ENCODE measurements at regions of chr4 and their contacts with region 1.

Region 1: GRCh38 chr4:26197018-26197779 is 123.6 kb upstream of the RBPJ start:
- DNase-seq: peak in 5 of 9 donors; percentile 1 to 74 (median 6)
- ATAC-seq: peak; percentile 78
- H3K4me3 ChIP-seq: peak overlapping the region; percentile 31
- H3K4me3 Mint-ChIP-seq: peak overlapping the region in 9 of 10 donors; percentile 21 to 82 (median 63)
- H3K27ac ChIP-seq: peak overlapping the region; percentile 38
- H3K27ac Mint-ChIP-seq: peak overlapping the region in 8 of 9 donors; percentile 42 to 95 (median 80)
- H3K4me1 ChIP-seq: peaks cover 17 to 37% of the 10 kb centered on the region in 2 donors
- H3K4me1 Mint-ChIP-seq: peaks cover 18 to 80% (median 30%) of the 10 kb centered on the region in 7 donors
- H3K27me3 ChIP-seq: no peaks in the 10 kb centered on the region
- H3K27me3 Mint-ChIP-seq: no peaks in the 10 kb centered on the region

Region 2: GRCh38 chr4:26076000-26076587 is 121.1 kb before region 1 on chr4:
- CTCF ChIA-PET with region 1: no interaction called
- POLR2A ChIA-PET with region 1: no interaction called
- intact Hi-C with region 1: loop called in 1 of 2 experiments (anchors 1 kb)
- DNase-seq: peak in 1 of 9 donors; percentile 53
- ATAC-seq: peak; percentile 77
- H3K4me3 ChIP-seq: no peak overlapping the region
- H3K4me3 Mint-ChIP-seq: peak overlapping the region in 1 of 10 donors; percentile 63
- H3K27ac ChIP-seq: no peak overlapping the region
- H3K27ac Mint-ChIP-seq: peak overlapping the region in 1 of 9 donors; percentile 91
- H3K4me1 ChIP-seq: peaks cover 0 to 15% of the 10 kb centered on the region in 2 donors
- H3K4me1 Mint-ChIP-seq: peaks cover 3 to 63% (median 14%) of the 10 kb centered on the region in 7 donors
- H3K27me3 ChIP-seq: no peaks in the 10 kb centered on the region
- H3K27me3 Mint-ChIP-seq: peaks cover 0 to 15% (median 0%) of the 10 kb centered on the region in 5 donors

Region 3: DNA sequence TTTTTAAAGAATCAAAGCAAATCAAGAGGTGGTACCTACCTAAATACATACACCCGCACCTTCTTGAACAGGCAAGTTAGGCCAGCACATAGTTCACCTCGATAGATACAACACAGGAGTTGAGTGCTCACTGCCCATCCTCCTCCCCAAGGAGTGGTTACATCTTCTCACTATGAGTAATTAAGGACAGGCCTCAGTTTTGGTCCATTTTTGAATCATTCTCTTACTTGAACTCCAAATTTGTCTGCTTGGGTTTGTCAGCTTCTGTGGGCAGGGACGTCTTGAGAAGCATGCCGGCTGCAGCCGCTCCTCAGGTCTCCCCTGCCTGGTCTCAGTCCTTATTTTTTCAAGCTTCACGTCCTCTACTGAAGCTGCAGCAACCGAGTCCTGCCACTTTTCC is 67.0 kb before region 1 on chr4:
- CTCF ChIA-PET with region 1: no interaction called
- POLR2A ChIA-PET with region 1: no interaction called
- intact Hi-C with region 1: loop called in 1 of 2 experiments (anchors 5 kb)
- DNase-seq: no peak
- ATAC-seq: no peak
- H3K4me3 ChIP-seq: no peak overlapping the region
- H3K4me3 Mint-ChIP-seq: peak overlapping the region in 1 of 10 donors; percentile 6
- H3K27ac ChIP-seq: no peak overlapping the region
- H3K27ac Mint-ChIP-seq: peak overlapping the region in 1 of 9 donors; percentile 68
- H3K4me1 ChIP-seq: peaks cover 0 to 14% of the 10 kb centered on the region in 2 donors
- H3K4me1 Mint-ChIP-seq: peaks cover 0 to 54% (median 0%) of the 10 kb centered on the region in 7 donors
- H3K27me3 ChIP-seq: no peaks in the 10 kb centered on the region
- H3K27me3 Mint-ChIP-seq: peaks cover 0 to 13% (median 9%) of the 10 kb centered on the region in 5 donors

Region 4: DNA sequence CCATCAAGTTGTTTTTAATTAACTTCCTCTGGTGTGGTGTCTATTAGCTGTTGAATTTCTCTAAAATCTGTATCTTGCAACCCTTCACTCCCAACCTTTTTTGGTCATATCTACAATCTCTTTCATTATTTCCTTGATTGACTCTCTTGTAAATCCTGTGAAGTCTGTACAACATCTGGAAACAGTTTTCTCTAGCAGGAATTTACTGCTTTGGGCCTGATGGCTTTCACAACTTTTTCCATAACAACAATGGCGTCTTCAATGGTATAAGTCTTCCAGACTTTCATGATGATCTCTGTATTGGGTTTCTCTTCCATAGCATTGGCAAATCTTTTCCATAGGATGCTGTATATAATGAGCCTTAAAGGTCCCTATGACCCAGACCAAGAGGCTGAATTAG is 435.7 kb after region 1 on chr4:
- CTCF ChIA-PET with region 1: no interaction called
- POLR2A ChIA-PET with region 1: no interaction called
- intact Hi-C with region 1: no loop called
- DNase-seq: no peak
- ATAC-seq: no peak
- H3K4me3 ChIP-seq: no peak overlapping the region
- H3K4me3 Mint-ChIP-seq: no peak overlapping the region
- H3K27ac ChIP-seq: no peak overlapping the region
- H3K27ac Mint-ChIP-seq: no peak overlapping the region
- H3K4me1 ChIP-seq: no peaks in the 10 kb centered on the region
- H3K4me1 Mint-ChIP-seq: peaks cover 0 to 4% (median 0%) of the 10 kb centered on the region in 7 donors
- H3K27me3 ChIP-seq: no peaks in the 10 kb centered on the region
- H3K27me3 Mint-ChIP-seq: no peaks in the 10 kb centered on the region